Testis (tissue), 5 donors: ENCODE measurements at regions of chrX and their contacts with region 1.

Region 1: DNA sequence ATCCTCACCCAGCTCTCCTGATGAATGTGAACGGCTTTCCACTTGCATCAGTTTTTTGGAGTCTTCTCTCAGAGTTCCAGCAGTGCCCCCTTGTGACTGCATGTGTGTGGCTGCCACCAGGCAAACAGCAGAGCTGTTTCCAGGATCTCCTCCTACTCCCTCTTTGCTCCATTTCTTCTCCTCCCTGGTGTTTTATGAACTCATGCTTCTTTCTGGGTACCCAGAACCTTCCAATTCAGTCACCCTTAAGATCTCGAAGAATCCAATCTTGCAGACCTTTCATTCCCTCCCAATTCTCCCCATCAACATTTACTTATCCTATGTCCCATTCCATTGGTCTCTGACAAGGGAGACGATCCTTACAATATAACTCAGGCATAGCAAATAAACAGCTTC is 6.8 kb upstream of the TCEANC start:
- DNase-seq: peak; percentile 77
- H3K4me3 ChIP-seq: no peak overlapping the region
- H3K27ac ChIP-seq: no peak overlapping the region
- H3K4me1 ChIP-seq: no peaks in the 10 kb centered on the region
- H3K27me3 ChIP-seq: no peaks in the 10 kb centered on the region
- CTCF ChIP-seq: peak in 2 of 3 experiments; percentile 37 to 46
- POLR2A ChIP-seq: no peak

Region 2: DNA sequence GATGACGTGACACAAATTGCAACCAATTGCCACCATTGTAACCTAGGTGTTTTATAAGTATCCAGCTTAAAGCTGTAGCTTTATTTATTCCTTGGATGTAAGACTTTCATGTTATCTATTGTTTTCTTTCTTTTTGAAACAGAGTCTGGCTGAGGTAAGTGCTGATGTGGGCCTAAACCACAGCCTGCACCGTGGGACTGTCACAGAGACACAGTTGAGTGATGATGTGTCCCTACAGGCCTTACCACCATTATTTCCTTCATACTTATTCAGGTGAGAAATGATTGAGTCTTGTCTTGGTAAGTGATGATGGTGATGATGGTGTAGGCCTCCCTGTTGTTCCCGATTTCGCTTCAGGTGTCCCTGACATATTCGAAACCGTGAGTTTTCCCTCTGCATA is 334.6 kb before region 1 on chrX:
- intact Hi-C with region 1: no loop called
- DNase-seq: no peak
- H3K4me3 ChIP-seq: no peak overlapping the region
- H3K27ac ChIP-seq: no peak overlapping the region
- H3K4me1 ChIP-seq: no peaks in the 10 kb centered on the region
- H3K27me3 ChIP-seq: no peaks in the 10 kb centered on the region
- CTCF ChIP-seq: no peak
- POLR2A ChIP-seq: no peak

Region 3: DNA sequence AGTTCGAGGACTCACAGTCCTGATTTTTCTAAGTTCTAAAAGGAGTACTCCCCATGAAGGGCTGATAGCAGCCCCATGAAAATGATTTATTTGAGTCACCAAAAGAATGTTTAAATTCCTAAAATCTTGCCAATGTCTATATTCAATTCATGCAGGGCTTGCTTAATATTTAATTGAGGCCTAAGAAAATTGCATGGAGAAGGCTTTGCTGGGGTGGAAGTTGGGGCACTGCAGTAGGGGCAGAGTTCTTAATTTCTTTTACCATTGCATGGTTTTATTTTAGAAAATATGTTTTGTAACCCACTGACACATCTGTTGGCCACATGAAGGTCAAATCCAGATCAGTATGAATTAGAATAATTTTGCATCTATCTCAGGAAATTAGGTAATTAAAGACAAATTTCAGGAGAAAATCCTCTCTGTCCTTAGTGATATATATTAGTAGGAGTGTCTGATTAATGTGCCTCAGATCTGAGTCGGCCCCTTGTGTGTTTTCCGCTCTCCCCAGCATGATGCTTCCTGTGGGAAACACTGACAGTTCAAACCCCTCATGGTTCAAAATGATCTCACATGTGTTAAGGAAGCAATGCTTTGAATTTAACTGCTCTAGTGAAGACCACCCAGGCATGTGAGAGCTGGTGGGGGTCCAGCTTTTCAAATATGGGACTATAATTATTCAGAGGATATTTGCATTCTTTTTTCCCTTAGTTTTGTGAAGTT is 130.8 kb before region 1 on chrX:
- intact Hi-C with region 1: loop called (anchors 10 kb)
- DNase-seq: no peak
- H3K4me3 ChIP-seq: no peak overlapping the region
- H3K27ac ChIP-seq: no peak overlapping the region
- H3K4me1 ChIP-seq: no peaks in the 10 kb centered on the region
- H3K27me3 ChIP-seq: no peaks in the 10 kb centered on the region
- CTCF ChIP-seq: no peak
- POLR2A ChIP-seq: no peak